ENCODE measurements at regions of chr3 and their contacts with region 1.

Region 1: GRCh38 chr3:98901392-98902350 is at the start of gene DCBLD2:
- DNase-seq: peak; percentile 95 to 99 (median 98)
- H3K4me3 ChIP-seq: peak within 1 kb of the TSS; percentile 66 to 98 (median 89)
- H3K27ac ChIP-seq: peak within 1 kb of the TSS; percentile 59 to 97 (median 92)
- H3K27me3 ChIP-seq: no peaks in the 10 kb centered on the region
- CTCF ChIP-seq: peak in 15 of 56 donors; percentile 7 to 48 (median 18)
- total RNA-seq, gene DCBLD2: 13.2 to 33.0 (median 22.0) TPM

Region 2: GRCh38 chr3:98994128-98994762 is 92.6 kb after region 1 on chr3:
- intact Hi-C with region 1: loop called in 1 of 2 experiments (anchors 5 kb)
- DNase-seq: no peak
- H3K4me3 ChIP-seq: no peak overlapping the region
- H3K27ac ChIP-seq: no peak overlapping the region
- H3K27me3 ChIP-seq: no peaks in the 10 kb centered on the region
- CTCF ChIP-seq: peak; percentile 72 to 94 (median 86)